Breast epithelium (tissue), 4 donors: ENCODE measurements at regions of chr7 and their contacts with region 1.

Region 1: GRCh38 chr7:17849504-17849903 is 90.8 kb downstream of the SNX13 start:
- DNase-seq: no peak
- H3K4me3 ChIP-seq: no peak overlapping the region
- H3K27ac ChIP-seq: no peak overlapping the region
- H3K4me1 ChIP-seq: no peaks in the 10 kb centered on the region
- H3K27me3 ChIP-seq: no peaks in the 10 kb centered on the region
- CTCF ChIP-seq: no peak
- POLR2A ChIP-seq: no peak

Region 2: GRCh38 chr7:17830206-17830605 is 19.3 kb before region 1 on chr7:
- intact Hi-C with region 1: no loop called
- DNase-seq: no peak
- H3K4me3 ChIP-seq: no peak overlapping the region
- H3K27ac ChIP-seq: no peak overlapping the region
- H3K4me1 ChIP-seq: no peaks in the 10 kb centered on the region
- H3K27me3 ChIP-seq: no peaks in the 10 kb centered on the region
- CTCF ChIP-seq: no peak
- POLR2A ChIP-seq: no peak

Region 3: GRCh38 chr7:17887286-17887685 is 37.8 kb after region 1 on chr7:
- intact Hi-C with region 1: loop called (anchors 2 kb)
- DNase-seq: no peak
- H3K4me3 ChIP-seq: no peak overlapping the region
- H3K27ac ChIP-seq: no peak overlapping the region
- H3K4me1 ChIP-seq: no peaks in the 10 kb centered on the region
- H3K27me3 ChIP-seq: no peaks in the 10 kb centered on the region
- CTCF ChIP-seq: no peak
- POLR2A ChIP-seq: no peak

Region 4: DNA sequence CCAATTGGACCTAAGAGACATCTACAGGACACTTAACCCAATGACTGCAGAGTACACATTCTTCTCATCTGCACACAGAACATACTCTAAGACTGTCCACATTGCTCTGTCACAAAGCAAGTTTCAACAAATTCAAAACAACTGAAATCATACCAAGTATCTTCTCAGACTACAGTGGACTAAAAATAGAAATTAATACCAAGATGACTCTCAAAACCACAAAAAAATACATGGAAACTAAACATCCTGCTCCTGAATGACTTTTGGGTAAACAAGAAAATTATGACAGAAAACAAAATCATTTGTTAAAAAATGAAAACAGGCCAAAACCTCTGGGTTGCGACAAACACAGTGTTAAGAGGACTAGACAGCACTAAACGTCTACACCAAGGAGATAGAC is 66.3 kb after region 1 on chr7:
- intact Hi-C with region 1: no loop called
- DNase-seq: no peak
- H3K4me3 ChIP-seq: no peak overlapping the region
- H3K27ac ChIP-seq: no peak overlapping the region
- H3K4me1 ChIP-seq: no peaks in the 10 kb centered on the region
- H3K27me3 ChIP-seq: no peaks in the 10 kb centered on the region
- CTCF ChIP-seq: no peak
- POLR2A ChIP-seq: no peak

Region 5: GRCh38 chr7:18530224-18531179 is 681.0 kb after region 1 on chr7:
- intact Hi-C with region 1: no loop called
- DNase-seq: no peak
- H3K4me3 ChIP-seq: no peak overlapping the region
- H3K27ac ChIP-seq: no peak overlapping the region
- H3K4me1 ChIP-seq: no peaks in the 10 kb centered on the region
- H3K27me3 ChIP-seq: no peaks in the 10 kb centered on the region
- CTCF ChIP-seq: no peak
- POLR2A ChIP-seq: no peak

Region 6: GRCh38 chr7:19352305-19352695 is 1502.8 kb after region 1 on chr7:
- intact Hi-C with region 1: no loop called
- DNase-seq: no peak
- H3K4me3 ChIP-seq: no peak overlapping the region
- H3K27ac ChIP-seq: no peak overlapping the region
- H3K4me1 ChIP-seq: no peaks in the 10 kb centered on the region
- H3K27me3 ChIP-seq: no peaks in the 10 kb centered on the region
- CTCF ChIP-seq: no peak
- POLR2A ChIP-seq: no peak